ENCODE measurements at regions of chr20 and their contacts with region 1.

Region 1: GRCh38 chr20:50308513-50309279 is 118.1 kb downstream of the CEBPB start:
- DNase-seq: peak; percentile 79 to 87
- ATAC-seq: peak; percentile 19 to 27
- H3K4me3 ChIP-seq: no peak overlapping the region
- H3K27ac ChIP-seq: peak overlapping the region; percentile 87 to 95 (median 90)
- H3K4me1 ChIP-seq: peaks cover 49 to 53% of the 10 kb centered on the region in 2 donors
- H3K27me3 ChIP-seq: no peaks in the 10 kb centered on the region
- CTCF ChIP-seq: no peak
- POLR2A ChIP-seq: peak; percentile 53 to 67

Region 2: DNA sequence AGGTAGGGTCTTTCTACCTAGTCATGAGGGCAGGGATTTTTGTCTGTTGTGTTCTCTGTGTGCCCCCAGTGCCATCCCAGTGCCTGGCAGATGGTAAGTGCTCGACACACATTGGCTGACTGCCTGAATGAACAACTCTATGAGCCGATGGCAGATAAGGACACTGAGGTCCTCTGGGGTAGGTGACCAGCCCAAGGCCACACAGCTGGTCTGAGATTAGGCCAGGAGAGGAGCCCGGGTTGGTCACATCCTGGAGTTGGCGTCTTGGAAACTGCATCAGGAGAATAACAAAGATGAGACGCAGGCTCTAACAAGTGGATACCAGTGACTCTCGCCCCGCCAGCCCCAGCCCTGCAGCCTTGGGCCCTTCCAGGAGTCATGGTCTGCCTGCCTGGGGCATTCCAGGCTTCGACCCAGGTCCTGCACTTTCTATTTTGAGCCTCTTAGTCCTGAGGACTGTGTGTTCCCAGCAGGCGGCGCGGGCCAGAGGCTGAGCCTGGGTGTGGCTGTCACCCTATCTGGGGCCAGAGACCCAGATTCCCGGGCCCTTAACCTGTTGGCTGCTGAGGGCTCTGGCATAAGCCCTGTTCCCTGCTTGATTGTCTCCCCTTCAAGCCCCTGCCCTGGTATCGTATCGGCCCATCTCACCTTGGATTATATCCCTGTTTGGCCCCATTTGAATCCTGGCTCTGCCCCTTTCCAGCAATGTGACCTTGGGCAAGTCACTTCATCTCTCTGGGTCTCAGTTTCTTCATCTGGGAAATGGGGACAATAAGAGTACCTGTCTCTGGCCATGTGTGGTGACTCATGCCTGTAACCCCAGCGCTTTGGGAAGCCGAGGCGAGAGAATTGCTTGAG is 29.8 kb before region 1 on chr20:
- in situ Hi-C with region 1: no loop called
- intact Hi-C with region 1: loop called (anchors 2 kb)
- DNase-seq: peak; percentile 91 to 98
- ATAC-seq: peak; percentile 79 to 85
- H3K4me3 ChIP-seq: no peak overlapping the region
- H3K27ac ChIP-seq: peak overlapping the region; percentile 87 to 96 (median 92)
- H3K4me1 ChIP-seq: peaks cover 43 to 50% of the 10 kb centered on the region in 2 donors
- H3K27me3 ChIP-seq: no peaks in the 10 kb centered on the region
- CTCF ChIP-seq: peak; percentile 46 to 54 (median 49)
- POLR2A ChIP-seq: peak; percentile 52 to 63

Region 3: GRCh38 chr20:50292324-50293243 is 16.1 kb before region 1 on chr20:
- in situ Hi-C with region 1: no loop called
- intact Hi-C with region 1: no loop called
- DNase-seq: peak; percentile 89 to 92
- ATAC-seq: peak; percentile 76 to 84
- H3K4me3 ChIP-seq: no peak overlapping the region
- H3K27ac ChIP-seq: peak overlapping the region; percentile 83 to 95 (median 85)
- H3K4me1 ChIP-seq: peaks cover 19 to 21% of the 10 kb centered on the region in 2 donors
- H3K27me3 ChIP-seq: no peaks in the 10 kb centered on the region
- CTCF ChIP-seq: no peak
- POLR2A ChIP-seq: peak; percentile 32

Measured in gastrocnemius medialis (tissue), 4 donors.